Dorsolateral prefrontal cortex (tissue), 120 donors: ENCODE measurements at regions of chr14 and their contacts with region 1.

Region 1: GRCh38 chr14:53953002-53953827 is 3.4 kb downstream of the BMP4 start:
- DNase-seq: peak in 8 of 10 donors; percentile 46 to 85 (median 68)
- H3K4me3 ChIP-seq: peak overlapping the region; percentile 41 to 81 (median 65)
- H3K27ac ChIP-seq: peak overlapping the region in 49 of 59 donors; percentile 9 to 87 (median 66)
- H3K27me3 ChIP-seq: peaks cover 0 to 87% (median 32%) of the 10 kb centered on the region in 45 donors
- CTCF ChIP-seq: no peak

Region 2: DNA sequence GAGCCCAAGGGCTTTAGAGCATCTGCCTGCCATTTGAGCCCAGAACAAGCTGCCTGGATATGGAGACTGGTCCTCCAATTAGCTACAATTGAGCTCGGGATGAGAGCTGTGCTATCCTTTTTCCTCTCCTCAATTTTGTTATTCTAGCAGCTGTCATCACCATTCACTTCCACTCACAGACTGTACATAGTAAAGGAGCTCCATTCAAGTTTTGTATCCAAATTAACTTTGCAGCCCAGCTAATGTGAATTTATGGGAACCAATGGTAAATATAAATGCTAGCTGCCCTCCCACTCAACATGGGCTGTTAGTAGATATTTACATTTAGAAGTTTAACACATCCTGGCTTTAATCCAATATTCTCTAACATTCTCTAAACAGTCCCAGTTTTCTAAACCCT is 41.2 kb before region 1 on chr14:
- intact Hi-C with region 1: no loop called
- DNase-seq: no peak
- H3K4me3 ChIP-seq: no peak overlapping the region
- H3K27ac ChIP-seq: no peak overlapping the region
- H3K27me3 ChIP-seq: no peaks in the 10 kb centered on the region
- CTCF ChIP-seq: no peak

Region 3: DNA sequence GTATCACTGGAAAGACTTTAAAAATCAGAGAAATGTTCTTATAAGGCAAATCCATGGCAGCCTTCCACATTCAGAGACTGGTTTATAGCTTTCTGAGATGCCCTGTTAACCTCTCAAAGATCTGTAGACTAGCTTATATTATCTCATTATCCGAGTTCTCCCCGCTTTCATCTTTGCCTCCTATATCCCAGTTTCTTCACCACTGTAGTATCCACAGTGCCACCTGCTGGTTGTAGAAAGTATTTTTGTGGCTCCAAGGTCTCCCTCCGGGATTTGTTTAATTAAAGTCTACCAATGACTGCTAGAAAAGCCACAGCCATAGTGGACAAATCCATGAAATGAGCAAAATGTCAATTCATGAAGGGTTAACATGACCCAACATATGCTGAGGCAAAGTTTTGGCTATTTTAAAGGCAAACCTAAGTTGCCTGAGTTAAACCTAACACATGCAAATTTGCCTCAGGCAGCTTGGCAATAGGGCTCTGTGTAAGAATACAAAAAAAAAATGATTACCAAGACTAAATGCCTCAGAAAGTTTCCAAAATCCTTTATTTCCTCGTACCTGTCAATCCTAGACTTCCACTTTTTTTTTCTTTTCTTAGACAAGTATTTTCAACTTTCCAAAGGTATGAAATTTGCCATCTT is 222.2 kb after region 1 on chr14:
- intact Hi-C with region 1: loop called in 1 of 2 experiments (anchors 10 kb)
- DNase-seq: peak in 6 of 10 donors; percentile 44 to 74 (median 60)
- H3K4me3 ChIP-seq: no peak overlapping the region
- H3K27ac ChIP-seq: no peak overlapping the region
- H3K27me3 ChIP-seq: no peaks in the 10 kb centered on the region
- CTCF ChIP-seq: peak; percentile 77 to 97 (median 89)

Region 4: DNA sequence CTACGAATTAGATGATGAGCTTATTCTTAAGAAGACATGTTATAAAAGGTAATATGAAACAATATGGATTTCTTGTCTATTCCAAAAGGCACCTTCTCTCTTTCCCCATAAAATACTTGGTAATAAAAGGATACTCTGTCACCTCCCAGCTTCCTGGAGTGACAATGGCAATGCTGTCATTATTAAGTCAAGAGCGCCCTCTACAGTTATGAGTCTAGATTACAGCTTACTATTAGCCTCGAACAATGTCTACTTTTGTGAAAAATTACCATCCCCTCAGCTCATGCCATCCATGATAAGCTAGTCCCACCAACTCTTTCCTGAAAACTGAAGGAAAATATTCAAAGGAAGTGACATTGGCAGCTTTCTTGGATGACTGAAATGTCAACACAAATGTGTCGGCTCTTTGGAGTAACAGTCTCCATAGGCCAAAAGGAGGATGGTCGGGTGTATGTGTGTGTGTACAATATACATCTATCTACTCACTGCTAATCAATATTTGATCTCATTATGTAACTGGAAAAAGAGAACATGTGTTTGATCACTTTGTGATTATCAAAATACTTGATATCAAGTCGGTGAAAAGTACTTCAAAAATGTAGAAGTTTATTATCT is 394.9 kb after region 1 on chr14:
- intact Hi-C with region 1: loop called in 1 of 2 experiments (anchors 10 kb)
- DNase-seq: peak in 1 of 10 donors; percentile 14
- H3K4me3 ChIP-seq: no peak overlapping the region
- H3K27ac ChIP-seq: peak overlapping the region in 5 of 59 donors; percentile 45 to 81 (median 63)
- H3K27me3 ChIP-seq: no peaks in the 10 kb centered on the region
- CTCF ChIP-seq: peak; percentile 60 to 94 (median 84)

Region 5: DNA sequence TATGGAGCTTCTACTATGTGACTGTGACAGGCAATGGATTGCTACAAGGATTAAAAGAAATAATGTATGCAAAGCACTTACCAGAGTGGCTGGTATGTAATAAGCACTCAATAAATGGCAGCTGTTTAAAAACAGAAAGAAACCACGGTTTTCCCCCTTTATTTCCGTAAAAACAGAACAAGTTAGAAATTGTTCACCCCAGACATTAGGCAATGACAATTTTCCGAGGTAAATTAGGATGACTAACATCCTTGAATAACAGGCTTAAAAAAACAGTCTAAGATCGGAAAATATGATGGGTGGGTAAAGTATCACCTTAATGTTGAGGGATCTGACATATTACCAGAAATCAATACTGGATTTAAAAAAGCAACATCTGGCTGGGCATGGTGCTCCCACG is 508.8 kb after region 1 on chr14:
- intact Hi-C with region 1: no loop called
- DNase-seq: no peak
- H3K4me3 ChIP-seq: no peak overlapping the region
- H3K27ac ChIP-seq: no peak overlapping the region
- H3K27me3 ChIP-seq: no peaks in the 10 kb centered on the region
- CTCF ChIP-seq: no peak